GM12878 (cell line): ENCODE measurements at regions of chr3 and their contacts with region 1.

Region 1: GRCh38 chr3:9352917-9353752 is 9.7 kb upstream of the THUMPD3 start:
- DNase-seq: peak; percentile 9
- ATAC-seq: peak; percentile 90
- H3K4me3 ChIP-seq: no peak overlapping the region
- H3K27ac ChIP-seq: no peak overlapping the region
- H3K4me1 ChIP-seq: peaks cover 5% of the 10 kb centered on the region; the same call in 1 of the 2 replicates
- H3K27me3 ChIP-seq: no peaks in the 10 kb centered on the region
- CTCF ChIP-seq: peak; percentile 83 to 94 (median 93)
- EP300 ChIP-seq: no peak
- POLR2A ChIP-seq: no peak
- RAD21 ChIP-seq: peak; percentile 89

Region 2: GRCh38 chr3:7953449-7954015 is 1399.6 kb before region 1 on chr3:
- CTCF ChIA-PET with region 1: no interaction called
- POLR2A ChIA-PET with region 1: no interaction called
- RAD21 ChIA-PET with region 1: no interaction called
- SMC1A ChIA-PET with region 1: no interaction called
- in situ Hi-C with region 1: no loop called
- intact Hi-C with region 1: no loop called
- DNase-seq: no peak
- ATAC-seq: no peak
- H3K4me3 ChIP-seq: no peak overlapping the region
- H3K27ac ChIP-seq: no peak overlapping the region
- H3K4me1 ChIP-seq: no peaks in the 10 kb centered on the region
- H3K27me3 ChIP-seq: no peaks in the 10 kb centered on the region
- CTCF ChIP-seq: no peak
- EP300 ChIP-seq: no peak
- POLR2A ChIP-seq: no peak
- RAD21 ChIP-seq: no peak

Region 3: GRCh38 chr3:9314796-9315195 is 38.3 kb before region 1 on chr3:
- CTCF ChIA-PET with region 1: no interaction called
- POLR2A ChIA-PET with region 1: no interaction called
- RAD21 ChIA-PET with region 1: no interaction called
- SMC1A ChIA-PET with region 1: no interaction called
- in situ Hi-C with region 1: no loop called
- intact Hi-C with region 1: no loop called
- DNase-seq: no peak
- ATAC-seq: no peak
- H3K4me3 ChIP-seq: no peak overlapping the region
- H3K27ac ChIP-seq: no peak overlapping the region
- H3K4me1 ChIP-seq: no peaks in the 10 kb centered on the region
- H3K27me3 ChIP-seq: peaks cover 0 to 2% of the 10 kb centered on the region in 2 experiments; a peak in 2 of 4 replicates
- CTCF ChIP-seq: no peak
- EP300 ChIP-seq: no peak
- POLR2A ChIP-seq: no peak
- RAD21 ChIP-seq: no peak

Region 4: GRCh38 chr3:9422712-9423424 is 69.7 kb after region 1 on chr3:
- CTCF ChIA-PET with region 1: interaction called, 4 read pairs
- POLR2A ChIA-PET with region 1: no interaction called
- RAD21 ChIA-PET with region 1: interaction called, 4 read pairs
- SMC1A ChIA-PET with region 1: interaction called, 4 read pairs
- in situ Hi-C with region 1: no loop called
- intact Hi-C with region 1: loop called (anchors 2 kb)
- DNase-seq: no peak
- ATAC-seq: peak; percentile 68
- H3K4me3 ChIP-seq: no peak overlapping the region
- H3K27ac ChIP-seq: no peak overlapping the region
- H3K4me1 ChIP-seq: no peaks in the 10 kb centered on the region
- H3K27me3 ChIP-seq: no peaks in the 10 kb centered on the region
- CTCF ChIP-seq: peak; percentile 18 to 45 (median 26); a peak in 4 of 6 replicates
- EP300 ChIP-seq: no peak
- POLR2A ChIP-seq: no peak
- RAD21 ChIP-seq: peak; percentile 53

Region 5: GRCh38 chr3:9497821-9498565 is 144.9 kb after region 1 on chr3:
- CTCF ChIA-PET with region 1: interaction called, 7 read pairs
- POLR2A ChIA-PET with region 1: no interaction called
- RAD21 ChIA-PET with region 1: no interaction called
- SMC1A ChIA-PET with region 1: interaction called, 13 read pairs
- in situ Hi-C with region 1: no loop called
- intact Hi-C with region 1: loop called (anchors 2 kb)
- DNase-seq: no peak
- ATAC-seq: no peak
- H3K4me3 ChIP-seq: no peak overlapping the region
- H3K27ac ChIP-seq: no peak overlapping the region
- H3K4me1 ChIP-seq: no peaks in the 10 kb centered on the region
- H3K27me3 ChIP-seq: peaks cover 1 to 8% of the 10 kb centered on the region in 2 experiments
- CTCF ChIP-seq: no peak
- EP300 ChIP-seq: no peak
- POLR2A ChIP-seq: no peak
- RAD21 ChIP-seq: no peak

Region 6: DNA sequence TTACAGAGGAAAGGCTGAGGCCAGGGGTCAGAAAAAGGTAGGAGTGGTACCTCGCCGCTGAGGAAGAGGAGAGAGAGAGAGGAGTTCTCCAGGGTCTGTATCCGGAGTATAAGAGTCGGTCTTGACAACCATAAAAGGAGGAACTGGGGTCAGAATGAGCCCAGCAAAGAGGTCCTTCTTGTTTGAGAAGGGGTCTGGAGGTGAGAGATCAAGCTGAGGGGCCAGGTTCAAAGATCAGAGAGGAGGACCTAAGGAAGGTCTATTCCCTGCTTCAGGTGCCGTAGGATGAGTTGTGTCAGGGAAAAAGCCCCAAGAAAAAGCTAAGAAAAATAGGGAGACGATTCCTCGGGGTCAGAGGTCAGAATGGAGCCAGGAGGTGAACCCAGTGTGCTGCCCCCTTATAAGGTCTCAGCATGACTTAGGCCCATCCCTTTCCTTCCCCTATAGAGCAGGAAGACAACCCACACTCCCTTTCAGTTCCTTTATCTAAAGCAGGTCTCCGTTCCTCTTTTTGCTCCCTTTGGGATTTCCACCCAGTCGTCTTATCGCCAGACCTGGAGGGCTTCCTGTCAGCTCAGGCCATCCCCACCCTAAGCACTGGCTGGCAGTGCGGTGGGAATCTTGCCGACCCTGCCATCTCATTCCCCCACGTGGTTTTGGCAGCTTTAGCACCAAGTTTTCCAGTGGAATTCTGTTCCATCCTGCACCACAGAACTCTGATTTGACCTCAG is 296.8 kb after region 1 on chr3:
- CTCF ChIA-PET with region 1: interaction called, 3 read pairs
- POLR2A ChIA-PET with region 1: interaction called, 4 read pairs
- RAD21 ChIA-PET with region 1: no interaction called
- SMC1A ChIA-PET with region 1: no interaction called
- in situ Hi-C with region 1: no loop called
- intact Hi-C with region 1: loop called (anchors 5 kb)
- DNase-seq: peak; percentile 47
- ATAC-seq: peak; percentile 76
- H3K4me3 ChIP-seq: peak overlapping the region; percentile 98
- H3K27ac ChIP-seq: peak overlapping the region; percentile 85
- H3K4me1 ChIP-seq: peaks cover 24% of the 10 kb centered on the region
- H3K27me3 ChIP-seq: no peaks in the 10 kb centered on the region
- CTCF ChIP-seq: no peak
- EP300 ChIP-seq: peak; percentile 31 to 78; a peak in 3 of 4 replicates
- POLR2A ChIP-seq: peak; percentile 22; the same call in 1 of the 2 replicates
- RAD21 ChIP-seq: no peak

Region 7: GRCh38 chr3:9731206-9732079 is 378.3 kb after region 1 on chr3 and contains the start of gene BRPF1:
- CTCF ChIA-PET with region 1: interaction called, 6 read pairs
- POLR2A ChIA-PET with region 1: no interaction called
- RAD21 ChIA-PET with region 1: interaction called, 6 read pairs
- SMC1A ChIA-PET with region 1: no interaction called
- in situ Hi-C with region 1: no loop called
- intact Hi-C with region 1: loop called (anchors 10 kb)
- DNase-seq: peak; percentile 90
- ATAC-seq: peak; percentile 97
- H3K4me3 ChIP-seq: peak within 1 kb of the TSS; percentile 94
- H3K27ac ChIP-seq: peak within 1 kb of the TSS; percentile 100
- H3K4me1 ChIP-seq: peaks cover 12% of the 10 kb centered on the region
- H3K27me3 ChIP-seq: no peaks in the 10 kb centered on the region
- CTCF ChIP-seq: no peak
- EP300 ChIP-seq: peak in 1 of 2 experiments; percentile 99; a peak in 2 of 4 replicates
- POLR2A ChIP-seq: peak; percentile 92
- RAD21 ChIP-seq: no peak
- polyA plus RNA-seq, gene BRPF1: 1.2 to 1.4 TPM